MCF 10A (cell line): ENCODE measurements at regions of chr3 and their contacts with region 1.

Region 1: DNA sequence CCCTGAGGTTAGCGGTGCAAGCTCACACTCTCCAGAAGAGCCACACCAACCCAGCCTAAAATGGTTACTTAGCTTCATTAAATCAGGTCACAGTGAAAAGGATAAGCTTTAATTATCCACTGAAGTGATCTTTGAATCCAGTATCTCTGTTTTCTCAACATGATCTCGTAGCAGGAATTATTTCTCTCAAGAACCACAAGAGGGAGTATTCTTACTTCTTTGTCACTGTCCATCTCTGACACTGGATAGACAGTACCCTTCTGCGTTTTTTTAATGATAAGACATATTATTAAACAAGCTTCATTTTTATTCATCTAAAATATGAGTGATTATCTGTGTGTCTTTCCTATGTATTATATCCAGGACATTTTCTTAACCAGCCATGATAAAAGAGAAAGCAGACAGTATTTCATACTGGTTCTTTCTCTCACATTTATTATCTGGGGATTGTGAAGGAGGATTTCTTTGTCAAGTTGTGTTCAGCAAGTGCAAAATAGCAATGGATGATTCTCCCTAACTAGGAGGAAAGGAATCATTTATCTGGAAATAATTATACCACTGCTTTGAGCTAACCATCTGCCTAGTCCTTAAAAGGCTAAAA is 105.4 kb upstream of the CCDC54 start:
- DNase-seq: peak; percentile 56
- H3K4me3 Mint-ChIP-seq: no peak overlapping the region
- H3K27ac Mint-ChIP-seq: peak overlapping the region; percentile 54
- H3K4me1 Mint-ChIP-seq: peaks cover 10% of the 10 kb centered on the region
- H3K27me3 Mint-ChIP-seq: no peaks in the 10 kb centered on the region
- CTCF ChIP-seq: peak; percentile 54

Region 2: DNA sequence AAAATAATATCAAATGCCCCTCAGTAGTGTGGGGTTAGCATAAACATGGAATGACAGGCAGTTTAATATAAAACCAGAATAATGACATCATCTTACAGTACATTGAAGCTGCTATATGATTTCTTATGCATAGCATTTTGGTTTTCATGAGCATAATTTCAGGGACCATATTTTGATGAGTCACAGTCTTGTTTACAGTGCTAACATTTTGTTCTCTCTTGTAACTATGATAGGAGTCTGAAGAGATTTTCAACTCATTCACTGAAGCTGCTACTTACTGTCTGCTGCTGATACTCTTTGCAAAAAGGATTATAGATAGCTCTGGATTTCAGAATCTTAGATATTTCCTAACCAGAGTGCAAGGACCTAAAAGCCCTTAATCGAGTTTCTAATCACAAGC is 12.7 kb after region 1 on chr3:
- CTCF ChIA-PET with region 1: interaction called, 66 read pairs
- POLR2A ChIA-PET with region 1: interaction called, 5 read pairs
- intact Hi-C with region 1: no loop called
- DNase-seq: peak; percentile 39
- H3K4me3 Mint-ChIP-seq: no peak overlapping the region
- H3K27ac Mint-ChIP-seq: peak overlapping the region; percentile 96
- H3K4me1 Mint-ChIP-seq: peaks cover 22% of the 10 kb centered on the region
- H3K27me3 Mint-ChIP-seq: no peaks in the 10 kb centered on the region
- CTCF ChIP-seq: no peak

Region 3: DNA sequence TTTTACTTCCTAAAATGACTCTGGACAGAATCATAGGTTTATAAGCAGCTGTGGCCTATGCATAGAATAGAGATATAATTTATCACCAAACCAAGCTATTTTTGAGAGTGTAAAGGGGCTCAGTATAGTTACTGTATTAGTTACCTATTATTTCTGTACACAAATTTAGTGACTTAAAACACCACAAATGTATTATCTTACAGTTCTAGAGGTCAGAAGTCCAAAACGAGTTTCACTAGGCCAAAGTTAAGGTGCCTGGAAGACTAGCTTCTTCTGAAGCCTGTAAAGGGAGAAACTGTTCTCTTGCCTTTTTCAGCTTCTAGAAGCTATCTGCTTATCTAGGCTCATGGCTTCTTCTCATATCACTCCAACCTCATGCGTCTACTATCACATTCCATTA is 135.5 kb after region 1 on chr3:
- CTCF ChIA-PET with region 1: interaction called, 22 read pairs
- POLR2A ChIA-PET with region 1: interaction called, 4 read pairs
- intact Hi-C with region 1: no loop called
- DNase-seq: no peak
- H3K4me3 Mint-ChIP-seq: no peak overlapping the region
- H3K27ac Mint-ChIP-seq: no peak overlapping the region
- H3K4me1 Mint-ChIP-seq: peaks cover 10% of the 10 kb centered on the region
- H3K27me3 Mint-ChIP-seq: no peaks in the 10 kb centered on the region
- CTCF ChIP-seq: no peak

Region 4: DNA sequence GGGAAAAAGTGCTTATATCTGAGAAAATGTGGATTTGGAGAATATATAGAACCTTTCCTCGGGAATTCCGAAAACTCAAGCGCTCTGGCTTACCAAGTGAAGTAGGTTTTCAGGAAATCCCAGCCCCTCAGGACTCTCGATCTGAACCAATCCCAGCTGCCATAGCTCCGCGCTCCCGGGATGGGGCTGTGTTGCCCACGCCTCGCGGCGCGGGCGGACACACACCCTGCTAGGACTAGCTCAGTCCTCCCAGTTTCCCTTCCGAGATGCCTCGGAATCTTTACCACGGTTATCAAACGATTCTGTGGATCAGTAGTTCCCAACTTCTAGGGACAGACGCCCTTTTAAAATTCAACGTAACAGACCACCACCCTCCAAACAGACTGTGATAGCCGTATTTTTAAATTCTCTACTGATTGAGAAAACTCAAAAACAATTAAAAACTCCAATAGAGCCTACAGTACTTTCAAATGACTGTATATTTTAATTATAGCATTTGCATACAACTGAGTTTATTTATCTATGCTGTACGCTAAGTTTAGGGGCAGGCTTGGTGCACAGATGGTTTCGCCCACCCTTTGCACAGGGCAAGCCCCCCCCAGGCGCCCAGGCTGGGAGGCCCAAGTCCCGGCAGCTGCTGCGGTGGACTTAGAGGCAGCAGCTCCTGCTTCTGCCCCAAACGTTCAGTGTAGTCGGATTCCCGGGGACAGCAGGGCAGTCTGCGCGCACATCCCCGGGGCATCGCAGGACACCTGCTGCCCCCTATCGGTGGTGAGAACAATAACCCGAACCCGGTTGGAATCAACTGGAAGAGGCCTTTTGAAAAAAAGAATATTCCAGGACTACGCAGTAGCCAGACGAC is 157.7 kb after region 1 on chr3:
- CTCF ChIA-PET with region 1: interaction called, 85 read pairs
- POLR2A ChIA-PET with region 1: interaction called, 11 read pairs
- intact Hi-C with region 1: loop called (anchors 1 kb)
- DNase-seq: peak; percentile 82
- H3K4me3 Mint-ChIP-seq: peak overlapping the region; percentile 79
- H3K27ac Mint-ChIP-seq: no peak overlapping the region
- H3K4me1 Mint-ChIP-seq: peaks cover 7% of the 10 kb centered on the region
- H3K27me3 Mint-ChIP-seq: no peaks in the 10 kb centered on the region
- CTCF ChIP-seq: peak; percentile 79

Region 5: GRCh38 chr3:107543666-107544065 is 271.8 kb after region 1 on chr3:
- CTCF ChIA-PET with region 1: interaction called, 11 read pairs
- POLR2A ChIA-PET with region 1: no interaction called
- intact Hi-C with region 1: no loop called
- DNase-seq: peak; percentile 30
- H3K4me3 Mint-ChIP-seq: no peak overlapping the region
- H3K27ac Mint-ChIP-seq: no peak overlapping the region
- H3K4me1 Mint-ChIP-seq: peaks cover 9% of the 10 kb centered on the region
- H3K27me3 Mint-ChIP-seq: no peaks in the 10 kb centered on the region
- CTCF ChIP-seq: peak; percentile 29